Naive thymus-derived CD4-positive, alpha-beta T cell (primary cell): ENCODE measurements at regions of chr14 and their contacts with region 1.

Region 1: GRCh38 chr14:76926521-76927251 is 100.5 kb downstream of the LRRC74A start:
- DNase-seq: peak in 8 of 9 donors; percentile 50 to 90 (median 69)
- ATAC-seq: peak; percentile 73
- H3K4me3 ChIP-seq: peak overlapping the region; percentile 6
- H3K4me3 Mint-ChIP-seq: peak overlapping the region; percentile 65 to 88 (median 80)
- H3K27ac ChIP-seq: peak overlapping the region; percentile 65
- H3K27ac Mint-ChIP-seq: peak overlapping the region; percentile 56 to 96 (median 90)
- H3K4me1 ChIP-seq: peaks cover 52 to 72% of the 10 kb centered on the region in 2 donors
- H3K4me1 Mint-ChIP-seq: peaks cover 50 to 96% (median 86%) of the 10 kb centered on the region in 7 donors
- H3K27me3 ChIP-seq: no peaks in the 10 kb centered on the region
- H3K27me3 Mint-ChIP-seq: no peaks in the 10 kb centered on the region

Region 2: DNA sequence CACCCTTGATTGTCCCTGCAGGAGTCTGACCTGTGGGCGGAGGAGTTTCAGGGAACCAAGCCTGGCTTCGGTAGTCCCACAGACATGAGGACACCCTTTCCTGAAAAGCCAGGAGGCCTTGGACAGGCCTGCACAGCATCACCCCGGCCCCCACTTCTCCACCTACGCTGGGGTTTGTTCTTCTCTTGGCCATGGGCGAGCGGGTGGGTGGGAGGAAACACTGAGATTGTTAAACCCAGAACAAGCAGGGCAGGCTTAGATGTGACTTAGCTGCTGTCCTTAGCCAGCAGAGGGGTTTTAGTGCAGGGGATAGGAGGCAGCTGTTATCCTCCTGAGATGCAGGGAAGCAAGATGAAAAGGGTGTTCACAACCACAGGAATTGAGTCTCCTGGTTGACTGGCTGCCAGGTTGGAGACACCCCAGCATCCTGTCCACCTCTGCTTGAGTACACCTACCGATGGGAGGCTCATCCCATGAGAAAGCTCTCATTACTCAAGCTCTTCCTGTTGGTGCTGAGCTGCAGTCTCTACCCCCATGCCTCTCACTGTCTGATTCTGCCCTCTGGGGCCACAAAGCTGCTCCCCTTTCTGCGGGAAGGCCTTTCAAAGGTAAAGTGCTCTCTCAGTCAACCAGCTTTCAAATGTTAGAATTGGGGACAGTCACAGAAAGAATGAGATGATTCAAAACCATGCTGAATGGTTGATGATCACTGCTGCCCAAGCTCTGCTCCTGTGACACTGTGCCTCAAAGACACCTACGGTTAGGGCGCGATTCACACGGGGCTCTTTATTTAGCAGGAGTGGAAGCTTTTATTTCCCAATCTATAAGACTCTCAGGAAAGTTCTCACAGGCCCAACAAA is 15.5 kb after region 1 on chr14:
- CTCF ChIA-PET with region 1: interaction called, 5 read pairs
- POLR2A ChIA-PET with region 1: interaction called, 6 read pairs
- intact Hi-C with region 1: loop called (anchors 1 to 2 kb)
- DNase-seq: no peak
- ATAC-seq: no peak
- H3K4me3 ChIP-seq: no peak overlapping the region
- H3K4me3 Mint-ChIP-seq: peak overlapping the region in 1 of 10 donors; percentile 41
- H3K27ac ChIP-seq: no peak overlapping the region
- H3K27ac Mint-ChIP-seq: peak overlapping the region in 3 of 9 donors; percentile 38 to 70 (median 70)
- H3K4me1 ChIP-seq: peaks cover 3 to 16% of the 10 kb centered on the region in 2 donors
- H3K4me1 Mint-ChIP-seq: peaks cover 7 to 23% (median 18%) of the 10 kb centered on the region in 7 donors
- H3K27me3 ChIP-seq: no peaks in the 10 kb centered on the region
- H3K27me3 Mint-ChIP-seq: no peaks in the 10 kb centered on the region

Region 3: DNA sequence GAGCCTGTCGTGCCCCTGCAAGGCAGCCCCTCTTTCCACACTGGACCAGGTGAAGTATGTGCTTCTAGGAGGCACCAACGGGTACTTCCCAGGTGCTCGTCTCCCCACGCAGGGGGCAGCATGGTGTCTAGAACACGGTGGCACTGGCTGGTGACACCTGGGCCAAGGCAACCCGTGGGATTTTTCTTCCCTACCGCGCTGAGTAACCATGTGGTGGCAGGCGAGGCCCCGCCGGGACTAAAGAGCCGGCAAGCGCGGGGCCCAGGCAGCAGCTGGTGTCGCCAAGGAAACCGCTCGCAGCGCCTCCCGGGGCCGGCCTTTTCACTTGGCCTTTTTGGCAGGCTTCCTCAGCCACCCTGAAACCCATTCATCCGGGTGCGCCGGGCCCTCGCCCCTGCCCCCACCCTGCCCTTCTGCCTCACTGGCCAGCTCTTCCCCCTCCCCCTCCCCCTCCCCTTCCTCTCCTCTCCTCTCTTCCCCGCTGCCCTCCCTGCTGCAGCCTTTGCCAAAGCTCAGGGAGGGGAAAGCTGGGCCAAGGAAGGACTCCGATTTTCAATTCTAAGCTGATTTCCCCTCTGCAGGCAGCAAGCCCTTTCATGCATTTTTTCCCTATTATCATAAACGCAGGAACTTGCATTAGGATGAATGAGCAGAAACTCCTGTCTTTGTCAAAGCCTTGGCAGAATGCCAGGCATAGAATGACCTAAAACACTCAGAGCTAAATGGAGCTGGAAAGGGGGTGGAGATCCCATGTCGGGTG is 20.6 kb after region 1 on chr14:
- CTCF ChIA-PET with region 1: interaction called, 5 read pairs
- POLR2A ChIA-PET with region 1: interaction called, 6 read pairs
- intact Hi-C with region 1: loop called (anchors 1 to 2 kb)
- DNase-seq: peak; percentile 53 to 76 (median 68)
- ATAC-seq: peak; percentile 96
- H3K4me3 ChIP-seq: no peak overlapping the region
- H3K4me3 Mint-ChIP-seq: peak overlapping the region in 9 of 10 donors; percentile 20 to 65 (median 50)
- H3K27ac ChIP-seq: peak overlapping the region; percentile 20
- H3K27ac Mint-ChIP-seq: peak overlapping the region in 7 of 9 donors; percentile 28 to 83 (median 63)
- H3K4me1 ChIP-seq: peaks cover 6 to 16% of the 10 kb centered on the region in 2 donors
- H3K4me1 Mint-ChIP-seq: peaks cover 20 to 56% (median 35%) of the 10 kb centered on the region in 7 donors
- H3K27me3 ChIP-seq: no peaks in the 10 kb centered on the region
- H3K27me3 Mint-ChIP-seq: no peaks in the 10 kb centered on the region

Region 4: GRCh38 chr14:76956316-76957090 is 29.8 kb after region 1 on chr14:
- CTCF ChIA-PET with region 1: interaction called, 14 read pairs
- POLR2A ChIA-PET with region 1: interaction called, 16 read pairs
- intact Hi-C with region 1: loop called (anchors 1 kb)
- DNase-seq: peak; percentile 70 to 90 (median 78)
- ATAC-seq: peak; percentile 82
- H3K4me3 ChIP-seq: peak overlapping the region; percentile 74
- H3K4me3 Mint-ChIP-seq: peak overlapping the region; percentile 82 to 97 (median 93)
- H3K27ac ChIP-seq: peak overlapping the region; percentile 87
- H3K27ac Mint-ChIP-seq: peak overlapping the region; percentile 88 to 99 (median 98)
- H3K4me1 ChIP-seq: peaks cover 38 to 49% of the 10 kb centered on the region in 2 donors
- H3K4me1 Mint-ChIP-seq: peaks cover 24 to 77% (median 71%) of the 10 kb centered on the region in 7 donors
- H3K27me3 ChIP-seq: no peaks in the 10 kb centered on the region
- H3K27me3 Mint-ChIP-seq: no peaks in the 10 kb centered on the region

Region 5: GRCh38 chr14:77033622-77034521 is 107.2 kb after region 1 on chr14:
- CTCF ChIA-PET with region 1: interaction called, 3 read pairs
- POLR2A ChIA-PET with region 1: interaction called, 6 read pairs
- intact Hi-C with region 1: loop called in 1 of 2 experiments (anchors 1 kb)
- DNase-seq: peak in 7 of 9 donors; percentile 32 to 89 (median 47)
- ATAC-seq: peak; percentile 76
- H3K4me3 ChIP-seq: peak overlapping the region; percentile 79
- H3K4me3 Mint-ChIP-seq: peak overlapping the region; percentile 81 to 93 (median 90)
- H3K27ac ChIP-seq: peak overlapping the region; percentile 95
- H3K27ac Mint-ChIP-seq: peak overlapping the region; percentile 92 to 98 (median 94)
- H3K4me1 ChIP-seq: peaks cover 37 to 67% of the 10 kb centered on the region in 2 donors
- H3K4me1 Mint-ChIP-seq: peaks cover 45 to 85% (median 78%) of the 10 kb centered on the region in 7 donors
- H3K27me3 ChIP-seq: no peaks in the 10 kb centered on the region
- H3K27me3 Mint-ChIP-seq: no peaks in the 10 kb centered on the region

Region 6: DNA sequence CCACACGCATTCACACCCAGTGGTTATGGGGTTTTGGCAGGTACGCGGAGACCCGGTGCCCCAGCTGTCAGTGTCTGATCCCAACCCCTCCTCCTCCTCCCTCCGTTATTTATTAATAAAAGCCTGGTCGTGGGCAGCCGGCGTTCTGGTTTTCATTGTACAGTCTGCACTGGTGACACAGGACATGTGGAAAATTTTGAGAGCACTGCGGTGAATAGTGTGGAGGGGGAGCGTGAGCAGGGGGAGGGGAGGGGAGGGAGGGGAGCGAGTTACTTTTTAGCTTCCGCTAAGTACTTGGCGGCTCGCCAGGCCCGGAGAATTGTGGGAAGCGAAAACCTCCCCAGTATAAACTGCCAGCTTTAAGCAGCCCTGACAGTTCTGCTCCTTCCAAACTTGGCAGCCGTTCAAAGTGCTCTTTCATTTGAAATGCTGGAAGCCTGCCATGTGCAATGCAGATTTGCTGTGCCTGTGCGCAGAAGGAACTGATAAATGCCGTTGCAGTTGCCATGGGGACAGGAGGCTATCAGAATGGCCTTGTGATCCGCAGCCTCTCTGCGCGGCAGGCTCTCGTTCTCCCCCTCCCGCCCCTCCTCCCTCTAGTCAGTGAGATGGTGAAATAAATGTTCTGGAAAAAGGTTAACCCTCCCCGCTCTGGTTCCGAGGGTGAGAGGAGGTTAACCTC is 113.5 kb after region 1 on chr14:
- CTCF ChIA-PET with region 1: interaction called, 4 read pairs
- POLR2A ChIA-PET with region 1: interaction called, 6 read pairs
- intact Hi-C with region 1: loop called in 1 of 2 experiments (anchors 1 kb)
- DNase-seq: peak; percentile 86 to 99 (median 99)
- ATAC-seq: peak; percentile 87
- H3K4me3 ChIP-seq: peak overlapping the region; percentile 78
- H3K4me3 Mint-ChIP-seq: peak overlapping the region; percentile 76 to 97 (median 87)
- H3K27ac ChIP-seq: peak overlapping the region; percentile 97
- H3K27ac Mint-ChIP-seq: peak overlapping the region; percentile 97 to 100 (median 99)
- H3K4me1 ChIP-seq: peaks cover 57 to 77% of the 10 kb centered on the region in 2 donors
- H3K4me1 Mint-ChIP-seq: peaks cover 50 to 97% (median 89%) of the 10 kb centered on the region in 7 donors
- H3K27me3 ChIP-seq: no peaks in the 10 kb centered on the region
- H3K27me3 Mint-ChIP-seq: no peaks in the 10 kb centered on the region